IMR-90 (cell line): ENCODE measurements at regions of chr7 and their contacts with region 1.

Region 1: DNA sequence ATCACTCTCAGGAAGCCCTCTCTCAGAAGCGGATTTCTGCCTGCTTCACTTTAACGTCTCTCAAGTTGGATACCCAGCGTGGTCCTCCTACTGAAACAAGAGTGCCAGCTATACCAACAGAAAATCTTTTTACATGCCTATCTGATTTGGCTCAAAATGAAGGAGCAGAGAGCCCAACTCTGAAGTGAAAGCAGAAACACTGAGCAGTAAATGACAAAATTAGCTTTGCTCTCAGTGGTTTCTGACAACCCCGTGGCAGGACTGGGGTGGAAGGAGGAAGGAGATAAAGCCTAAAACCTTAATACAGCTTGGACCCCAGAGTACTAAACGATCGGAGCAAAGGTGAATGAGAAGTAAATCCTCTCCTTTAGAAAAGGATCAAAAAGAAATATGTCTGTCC is 25.1 kb upstream of the GPR37 start:
- DNase-seq: no peak
- ATAC-seq: no peak
- H3K4me3 ChIP-seq: no peak overlapping the region
- H3K27ac ChIP-seq: no peak overlapping the region
- H3K4me1 ChIP-seq: peaks cover 3% of the 10 kb centered on the region; the same call in 1 of the 2 replicates
- H3K27me3 ChIP-seq: no peaks in the 10 kb centered on the region
- CTCF ChIP-seq: no peak
- POLR2A ChIP-seq: no peak
- RAD21 ChIP-seq: no peak

Region 2: DNA sequence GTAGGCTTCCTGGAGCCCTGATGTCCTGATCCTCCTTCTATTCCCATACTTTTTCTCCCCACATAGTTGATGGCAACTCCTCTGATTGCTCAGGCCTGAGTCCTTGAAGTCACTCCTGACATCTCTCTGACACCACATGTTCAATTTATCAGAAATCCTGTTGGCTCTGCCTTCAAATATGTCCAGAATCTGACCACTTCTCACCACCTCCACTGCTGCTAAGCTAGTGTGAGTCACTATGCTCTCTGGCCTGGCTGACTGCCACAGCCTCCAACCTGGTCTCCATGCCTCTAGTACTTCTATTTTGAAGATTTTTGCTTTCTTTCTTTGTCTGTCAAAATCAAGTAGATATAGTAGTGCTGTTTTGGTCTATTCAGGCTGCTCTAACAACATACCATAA is 810.8 kb before region 1 on chr7:
- CTCF ChIA-PET with region 1: no interaction called
- POLR2A ChIA-PET with region 1: no interaction called
- dilution Hi-C with region 1: no loop called
- in situ Hi-C with region 1: no loop called
- intact Hi-C with region 1: loop called (anchors 10 kb)
- DNase-seq: no peak
- ATAC-seq: no peak
- H3K4me3 ChIP-seq: no peak overlapping the region
- H3K27ac ChIP-seq: no peak overlapping the region
- H3K4me1 ChIP-seq: no peaks in the 10 kb centered on the region
- H3K27me3 ChIP-seq: no peaks in the 10 kb centered on the region
- CTCF ChIP-seq: no peak
- POLR2A ChIP-seq: no peak
- RAD21 ChIP-seq: no peak

Region 3: DNA sequence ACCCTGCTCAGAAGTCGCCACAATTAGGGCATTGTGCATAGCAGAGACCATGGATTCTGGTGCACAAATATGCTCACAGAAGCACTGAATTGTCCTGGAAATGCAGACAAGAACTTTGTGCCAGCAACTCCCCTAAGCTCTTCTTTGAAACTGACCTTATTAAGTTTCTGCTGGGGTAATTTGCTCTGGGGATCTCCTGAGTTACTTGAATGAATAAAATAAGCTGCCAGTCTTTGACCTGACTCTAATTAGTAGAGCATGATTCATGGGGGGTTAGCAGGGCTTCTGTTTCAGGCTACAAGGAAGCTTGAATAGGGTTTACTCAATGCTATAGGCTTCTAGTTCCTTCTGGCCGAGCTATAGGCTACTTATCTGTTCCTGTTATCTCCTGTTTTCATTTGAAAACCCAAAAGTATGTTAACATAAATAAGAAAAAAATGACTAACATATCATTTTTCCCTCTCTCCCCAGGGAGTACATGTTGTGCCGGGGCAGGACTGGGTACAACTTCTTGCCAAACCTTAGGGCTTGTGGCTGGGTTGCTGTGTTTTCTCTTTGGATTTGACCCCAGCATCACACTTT is 588.8 kb before region 1 on chr7:
- CTCF ChIA-PET with region 1: no interaction called
- POLR2A ChIA-PET with region 1: no interaction called
- dilution Hi-C with region 1: no loop called
- in situ Hi-C with region 1: no loop called
- intact Hi-C with region 1: no loop called
- DNase-seq: peak; percentile 41
- ATAC-seq: peak; percentile 94
- H3K4me3 ChIP-seq: no peak overlapping the region
- H3K27ac ChIP-seq: no peak overlapping the region
- H3K4me1 ChIP-seq: peaks cover 3% of the 10 kb centered on the region
- H3K27me3 ChIP-seq: no peaks in the 10 kb centered on the region
- CTCF ChIP-seq: no peak
- POLR2A ChIP-seq: no peak
- RAD21 ChIP-seq: no peak